Gastrocnemius medialis (tissue), 4 donors: ENCODE measurements at regions of chr2 and their contacts with region 1.

Region 1: DNA sequence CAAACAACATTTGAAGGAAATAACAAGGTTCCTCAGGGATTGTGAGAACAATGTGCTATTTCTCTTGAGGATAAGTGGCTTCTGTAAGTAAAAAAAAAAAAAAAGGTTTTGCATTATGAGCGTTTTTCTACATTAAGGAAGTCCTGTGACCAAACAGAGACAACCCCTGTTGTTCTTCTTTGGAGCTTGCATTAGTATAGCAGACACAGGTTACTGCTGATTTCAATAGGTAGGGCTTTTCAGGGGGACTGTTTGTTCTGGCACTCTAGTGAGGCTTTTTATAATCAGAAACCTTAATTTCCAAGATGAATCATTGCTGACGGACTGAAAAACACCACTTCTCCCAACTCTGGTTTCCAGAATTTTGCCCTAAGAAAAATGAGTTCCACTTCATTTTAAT is 8.2 kb downstream of the DPP10 start:
- DNase-seq: no peak
- ATAC-seq: no peak
- H3K4me3 ChIP-seq: no peak overlapping the region
- H3K27ac ChIP-seq: no peak overlapping the region
- H3K4me1 ChIP-seq: no peaks in the 10 kb centered on the region
- H3K27me3 ChIP-seq: no peaks in the 10 kb centered on the region
- CTCF ChIP-seq: no peak
- POLR2A ChIP-seq: no peak

Region 2: DNA sequence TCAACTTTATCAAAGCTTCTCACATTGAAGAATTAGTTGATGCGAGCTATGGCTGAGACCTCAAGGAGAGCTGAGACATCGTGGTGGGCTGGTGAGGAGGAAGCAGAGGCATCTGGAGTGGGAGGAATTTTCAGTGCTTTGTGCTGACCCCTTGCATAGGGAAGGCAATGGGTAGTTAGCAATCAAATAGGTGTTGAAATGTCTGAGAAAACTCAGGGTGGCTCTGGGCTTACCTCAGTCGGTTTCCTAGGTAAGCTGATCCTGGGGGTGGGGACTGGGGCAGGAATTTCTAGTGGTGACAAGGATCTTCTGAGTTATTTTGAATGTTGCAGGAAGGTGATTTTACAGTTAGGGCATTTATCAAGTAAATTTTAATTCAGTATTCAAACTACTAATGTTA is 28.9 kb before region 1 on chr2:
- in situ Hi-C with region 1: no loop called
- intact Hi-C with region 1: loop called (anchors 2 kb)
- DNase-seq: no peak
- ATAC-seq: no peak
- H3K4me3 ChIP-seq: no peak overlapping the region
- H3K27ac ChIP-seq: no peak overlapping the region
- H3K4me1 ChIP-seq: no peaks in the 10 kb centered on the region
- H3K27me3 ChIP-seq: no peaks in the 10 kb centered on the region
- CTCF ChIP-seq: no peak
- POLR2A ChIP-seq: no peak

Region 3: DNA sequence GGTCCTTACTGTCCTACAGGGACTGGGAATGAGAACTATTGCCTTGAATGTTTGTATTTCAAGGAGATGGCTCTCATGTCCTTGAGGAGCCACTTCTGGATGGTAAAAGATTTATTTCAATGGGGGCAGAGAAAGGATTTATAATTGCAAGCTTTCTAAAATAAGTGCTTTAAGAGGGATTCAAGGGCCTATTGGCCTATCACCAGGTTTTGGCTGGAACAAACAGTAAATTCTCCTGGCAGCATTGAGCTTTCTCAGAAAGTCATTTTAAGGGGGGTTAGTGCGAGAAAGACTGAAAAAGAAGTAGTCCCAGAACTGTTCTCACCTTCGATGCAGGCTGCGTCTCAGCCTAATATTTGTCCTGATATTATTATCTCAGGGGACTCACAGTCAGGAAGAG is 21.6 kb after region 1 on chr2:
- in situ Hi-C with region 1: no loop called
- intact Hi-C with region 1: no loop called
- DNase-seq: no peak
- ATAC-seq: no peak
- H3K4me3 ChIP-seq: no peak overlapping the region
- H3K27ac ChIP-seq: no peak overlapping the region
- H3K4me1 ChIP-seq: no peaks in the 10 kb centered on the region
- H3K27me3 ChIP-seq: no peaks in the 10 kb centered on the region
- CTCF ChIP-seq: no peak
- POLR2A ChIP-seq: no peak

Region 4: GRCh38 chr2:114862243-114862642 is 411.6 kb after region 1 on chr2:
- in situ Hi-C with region 1: no loop called
- intact Hi-C with region 1: no loop called
- DNase-seq: no peak
- ATAC-seq: no peak
- H3K4me3 ChIP-seq: no peak overlapping the region
- H3K27ac ChIP-seq: no peak overlapping the region
- H3K4me1 ChIP-seq: no peaks in the 10 kb centered on the region
- H3K27me3 ChIP-seq: no peaks in the 10 kb centered on the region
- CTCF ChIP-seq: no peak
- POLR2A ChIP-seq: no peak